ENCODE measurements at regions of chr4 and their contacts with region 1.

Region 1: GRCh38 chr4:95165926-95166524 is 382.7 kb downstream of the UNC5C start:
- DNase-seq: peak; percentile 54
- ATAC-seq: peak; percentile 84
- H3K4me3 ChIP-seq: no peak overlapping the region
- H3K27ac ChIP-seq: no peak overlapping the region
- H3K4me1 ChIP-seq: no peaks in the 10 kb centered on the region
- H3K27me3 ChIP-seq: no peaks in the 10 kb centered on the region; a peak in 1 of 5 replicates
- CTCF ChIP-seq: peak; percentile 76
- EP300 ChIP-seq: no peak
- POLR2A ChIP-seq: no peak
- RAD21 ChIP-seq: peak; percentile 51

Region 2: GRCh38 chr4:95193391-95194224 is 27.6 kb after region 1 on chr4:
- CTCF ChIA-PET with region 1: no interaction called
- POLR2A ChIA-PET with region 1: no interaction called
- in situ Hi-C with region 1: no loop called
- intact Hi-C with region 1: no loop called
- DNase-seq: no peak
- ATAC-seq: peak; percentile 56
- H3K4me3 ChIP-seq: no peak overlapping the region
- H3K27ac ChIP-seq: no peak overlapping the region
- H3K4me1 ChIP-seq: no peaks in the 10 kb centered on the region
- H3K27me3 ChIP-seq: peaks cover 1 to 7% of the 10 kb centered on the region in 2 experiments; a peak in 2 of 5 replicates
- CTCF ChIP-seq: no peak
- EP300 ChIP-seq: no peak
- POLR2A ChIP-seq: no peak
- RAD21 ChIP-seq: no peak

Region 3: GRCh38 chr4:95510145-95510544 is 344.1 kb after region 1 on chr4:
- CTCF ChIA-PET with region 1: no interaction called
- POLR2A ChIA-PET with region 1: no interaction called
- in situ Hi-C with region 1: no loop called
- intact Hi-C with region 1: loop called (anchors 5 kb)
- DNase-seq: peak; percentile 2
- ATAC-seq: peak; percentile 53; the same call in 1 of the 3 replicates
- H3K4me3 ChIP-seq: no peak overlapping the region
- H3K27ac ChIP-seq: no peak overlapping the region
- H3K4me1 ChIP-seq: no peaks in the 10 kb centered on the region
- H3K27me3 ChIP-seq: no peaks in the 10 kb centered on the region
- CTCF ChIP-seq: peak; percentile 30
- EP300 ChIP-seq: no peak
- POLR2A ChIP-seq: no peak
- RAD21 ChIP-seq: no peak

Region 4: DNA sequence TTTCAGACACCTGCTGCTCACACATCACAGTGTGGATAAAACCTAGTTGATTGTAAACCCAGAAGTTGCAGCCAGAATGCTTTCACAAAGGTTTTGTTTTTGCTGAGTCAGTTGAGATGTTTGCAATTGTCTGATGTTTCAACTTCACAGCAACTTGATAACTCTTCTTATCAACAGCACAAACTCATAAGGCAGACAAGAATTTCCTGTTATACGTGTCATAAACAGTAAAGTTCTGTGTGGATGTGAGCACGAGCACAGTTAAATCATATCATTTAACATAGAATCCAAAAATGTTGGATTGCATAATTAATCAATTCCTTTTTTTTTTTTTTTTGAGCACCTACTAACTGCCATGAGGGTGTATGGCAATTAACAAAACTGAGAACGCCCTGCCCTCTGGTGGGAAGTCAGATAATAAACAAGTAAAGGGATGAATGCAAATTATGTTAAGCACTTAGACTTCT is 1186.1 kb after region 1 on chr4:
- CTCF ChIA-PET with region 1: no interaction called
- POLR2A ChIA-PET with region 1: no interaction called
- in situ Hi-C with region 1: no loop called
- intact Hi-C with region 1: loop called (anchors 1 kb)
- DNase-seq: peak; percentile 0
- ATAC-seq: no peak
- H3K4me3 ChIP-seq: no peak overlapping the region
- H3K27ac ChIP-seq: no peak overlapping the region
- H3K4me1 ChIP-seq: no peaks in the 10 kb centered on the region
- H3K27me3 ChIP-seq: no peaks in the 10 kb centered on the region
- CTCF ChIP-seq: no peak
- EP300 ChIP-seq: no peak
- POLR2A ChIP-seq: no peak
- RAD21 ChIP-seq: no peak

Region 5: DNA sequence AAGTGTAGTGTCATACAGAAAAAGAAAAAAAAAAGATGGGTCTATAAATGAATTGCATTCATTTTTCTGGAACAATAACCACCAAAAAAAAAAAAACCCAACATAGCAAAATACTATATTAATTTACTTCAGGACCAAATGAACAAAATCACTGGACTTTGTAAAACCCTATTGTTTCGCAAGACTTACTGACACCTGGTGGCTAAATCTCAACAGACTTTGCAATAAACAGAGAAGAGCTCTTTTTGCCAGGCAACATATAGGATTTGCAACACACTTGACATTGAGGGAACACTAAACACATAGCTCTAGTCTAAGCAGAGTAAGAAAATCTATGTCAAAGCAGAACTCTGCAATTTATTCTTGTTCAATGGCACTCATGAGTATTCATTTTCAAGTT is 1987.0 kb after region 1 on chr4:
- CTCF ChIA-PET with region 1: no interaction called
- POLR2A ChIA-PET with region 1: no interaction called
- in situ Hi-C with region 1: loop called (anchors 25 kb)
- intact Hi-C with region 1: no loop called
- DNase-seq: peak; percentile 1
- ATAC-seq: no peak
- H3K4me3 ChIP-seq: no peak overlapping the region
- H3K27ac ChIP-seq: no peak overlapping the region
- H3K4me1 ChIP-seq: no peaks in the 10 kb centered on the region
- H3K27me3 ChIP-seq: no peaks in the 10 kb centered on the region
- CTCF ChIP-seq: no peak
- EP300 ChIP-seq: no peak
- POLR2A ChIP-seq: no peak
- RAD21 ChIP-seq: no peak

Measured in HepG2 (cell line).